Dorsolateral prefrontal cortex (tissue), 120 donors: ENCODE measurements at regions of chrX and their contacts with region 1.

Region 1: GRCh38 chrX:65034668-65035445 is 58.6 kb upstream of the ZC4H2 start:
- DNase-seq: peak; percentile 59 to 88 (median 77)
- H3K4me3 ChIP-seq: peak within 1 kb of the TSS; percentile 43 to 77 (median 65)
- H3K27ac ChIP-seq: peak within 1 kb of the TSS in 57 of 59 donors; percentile 15 to 89 (median 77)
- H3K27me3 ChIP-seq: peaks cover 0 to 53% (median 3%) of the 10 kb centered on the region in 45 donors
- CTCF ChIP-seq: peak in 51 of 56 donors; percentile 3 to 67 (median 52)

Region 2: DNA sequence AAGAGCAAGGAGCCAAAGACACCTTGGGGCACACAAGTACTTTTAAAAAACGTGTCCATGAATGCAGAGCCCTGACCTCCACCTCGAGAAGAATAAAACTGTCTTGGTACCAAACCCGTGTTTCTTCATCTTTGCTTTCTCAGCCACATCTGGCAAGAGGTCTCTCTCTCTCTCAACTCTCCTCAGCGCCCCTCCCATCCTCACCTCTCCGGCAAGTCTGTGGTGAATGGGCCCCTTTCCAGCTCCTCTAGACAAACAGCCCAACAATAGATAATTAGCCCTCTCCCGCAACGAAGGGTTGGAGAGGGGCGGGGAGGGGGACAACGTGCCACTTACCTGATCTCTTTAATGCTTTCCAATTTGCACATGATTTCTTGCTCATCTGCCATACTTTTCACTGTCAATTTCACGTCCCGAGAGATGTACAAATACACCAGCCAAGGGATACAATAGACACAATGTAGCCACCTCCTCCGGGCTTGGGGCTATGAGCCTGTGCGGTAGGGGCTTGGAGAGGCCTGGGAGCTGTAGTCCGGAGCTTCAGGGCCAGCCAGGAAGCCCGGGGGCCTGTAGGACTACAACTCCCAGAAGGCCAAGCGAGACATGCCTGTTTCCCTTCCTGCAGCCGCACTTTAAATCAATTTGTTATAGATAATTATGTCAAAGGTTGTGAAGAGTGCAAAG is 58.7 kb before region 1 on chrX and contains the start of gene ZC4H2:
- intact Hi-C with region 1: loop called (anchors 2 to 10 kb)
- DNase-seq: peak; percentile 59 to 85 (median 80)
- H3K4me3 ChIP-seq: peak within 1 kb of the TSS; percentile 44 to 79 (median 63)
- H3K27ac ChIP-seq: peak within 1 kb of the TSS in 23 of 59 donors; percentile 7 to 72 (median 37)
- H3K27me3 ChIP-seq: peaks cover 0 to 71% (median 8%) of the 10 kb centered on the region in 45 donors
- CTCF ChIP-seq: peak in 6 of 56 donors; percentile 10 to 25 (median 14)
- total RNA-seq, gene ZC4H2: 8.4 to 29.1 (median 18.6) TPM

Region 3: GRCh38 chrX:64994131-64994798 is 40.6 kb before region 1 on chrX:
- intact Hi-C with region 1: no loop called
- DNase-seq: no peak
- H3K4me3 ChIP-seq: no peak overlapping the region
- H3K27ac ChIP-seq: no peak overlapping the region
- H3K27me3 ChIP-seq: peaks cover 0 to 34% (median 3%) of the 10 kb centered on the region in 45 donors
- CTCF ChIP-seq: no peak

Region 4: DNA sequence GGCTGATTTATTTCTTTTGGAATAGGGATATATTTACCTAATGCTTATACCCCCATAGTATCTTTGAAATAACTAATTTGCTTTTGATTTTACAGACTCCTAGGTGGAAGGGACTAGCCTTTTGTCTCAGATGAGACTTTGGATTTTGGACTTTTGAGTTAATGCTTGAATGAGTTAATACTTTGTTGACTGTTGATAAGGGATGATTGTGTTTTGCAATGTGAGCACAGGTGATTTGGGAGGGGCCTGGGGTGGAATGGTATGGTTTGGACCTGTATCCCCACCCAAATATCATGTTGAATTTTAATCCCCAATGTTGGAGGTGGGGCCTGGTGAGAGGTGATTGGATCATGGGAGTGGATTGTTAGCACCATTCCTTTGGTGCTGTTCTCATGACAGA is 58.8 kb after region 1 on chrX:
- intact Hi-C with region 1: no loop called
- DNase-seq: no peak
- H3K4me3 ChIP-seq: no peak overlapping the region
- H3K27ac ChIP-seq: no peak overlapping the region
- H3K27me3 ChIP-seq: peaks cover 0 to 41% (median 3%) of the 10 kb centered on the region in 45 donors
- CTCF ChIP-seq: no peak

Region 5: GRCh38 chrX:65528705-65529340 is 494.0 kb after region 1 on chrX:
- intact Hi-C with region 1: loop called in 1 of 2 experiments (anchors 10 kb)
- DNase-seq: peak in 8 of 10 donors; percentile 27 to 72 (median 52)
- H3K4me3 ChIP-seq: no peak overlapping the region
- H3K27ac ChIP-seq: no peak overlapping the region
- H3K27me3 ChIP-seq: peaks cover 0 to 74% (median 8%) of the 10 kb centered on the region in 45 donors
- CTCF ChIP-seq: peak; percentile 70 to 98 (median 93)